ENCODE measurements at regions of chr19 and their contacts with region 1.

Region 1: GRCh38 chr19:42386974-42387707 is 3.0 kb downstream of the CNFN start:
- DNase-seq: peak; percentile 57
- H3K4me3 Mint-ChIP-seq: peak overlapping the region; percentile 21
- H3K27ac Mint-ChIP-seq: no peak overlapping the region
- H3K4me1 Mint-ChIP-seq: peaks cover 6% of the 10 kb centered on the region
- H3K27me3 Mint-ChIP-seq: peaks cover 35% of the 10 kb centered on the region

Region 2: DNA sequence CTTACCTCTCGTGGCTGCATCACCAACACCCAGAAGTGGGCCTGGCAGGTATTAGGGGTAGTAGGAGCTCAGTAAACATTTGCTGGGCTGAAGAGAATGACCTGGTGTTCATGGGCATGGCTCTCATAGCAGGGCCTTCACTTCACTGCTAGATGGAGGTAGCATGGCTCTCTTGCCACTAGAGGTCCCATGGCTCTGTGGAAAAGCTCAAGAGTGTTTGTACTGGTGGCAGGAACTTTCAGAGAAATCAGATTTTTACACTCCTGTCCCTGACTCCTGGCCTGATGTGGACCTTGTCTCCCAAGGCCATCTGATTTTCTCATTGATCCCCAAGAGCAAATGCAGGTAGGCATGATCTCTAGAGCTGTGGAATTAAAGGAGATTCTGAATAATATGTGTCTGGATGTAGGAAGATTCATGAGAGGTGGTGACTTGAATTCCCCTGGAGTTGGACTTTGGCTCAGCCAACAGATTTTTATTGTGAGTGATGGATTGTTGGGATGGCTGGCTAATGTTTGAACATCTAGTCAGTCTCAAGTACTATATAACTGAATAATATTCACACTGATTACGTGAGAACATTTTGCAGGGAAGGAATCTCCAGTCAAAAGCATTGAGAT is 305.4 kb before region 1 on chr19:
- intact Hi-C with region 1: no loop called
- DNase-seq: no peak
- H3K4me3 Mint-ChIP-seq: no peak overlapping the region
- H3K27ac Mint-ChIP-seq: no peak overlapping the region
- H3K4me1 Mint-ChIP-seq: peaks cover 26% of the 10 kb centered on the region
- H3K27me3 Mint-ChIP-seq: no peaks in the 10 kb centered on the region

Region 3: DNA sequence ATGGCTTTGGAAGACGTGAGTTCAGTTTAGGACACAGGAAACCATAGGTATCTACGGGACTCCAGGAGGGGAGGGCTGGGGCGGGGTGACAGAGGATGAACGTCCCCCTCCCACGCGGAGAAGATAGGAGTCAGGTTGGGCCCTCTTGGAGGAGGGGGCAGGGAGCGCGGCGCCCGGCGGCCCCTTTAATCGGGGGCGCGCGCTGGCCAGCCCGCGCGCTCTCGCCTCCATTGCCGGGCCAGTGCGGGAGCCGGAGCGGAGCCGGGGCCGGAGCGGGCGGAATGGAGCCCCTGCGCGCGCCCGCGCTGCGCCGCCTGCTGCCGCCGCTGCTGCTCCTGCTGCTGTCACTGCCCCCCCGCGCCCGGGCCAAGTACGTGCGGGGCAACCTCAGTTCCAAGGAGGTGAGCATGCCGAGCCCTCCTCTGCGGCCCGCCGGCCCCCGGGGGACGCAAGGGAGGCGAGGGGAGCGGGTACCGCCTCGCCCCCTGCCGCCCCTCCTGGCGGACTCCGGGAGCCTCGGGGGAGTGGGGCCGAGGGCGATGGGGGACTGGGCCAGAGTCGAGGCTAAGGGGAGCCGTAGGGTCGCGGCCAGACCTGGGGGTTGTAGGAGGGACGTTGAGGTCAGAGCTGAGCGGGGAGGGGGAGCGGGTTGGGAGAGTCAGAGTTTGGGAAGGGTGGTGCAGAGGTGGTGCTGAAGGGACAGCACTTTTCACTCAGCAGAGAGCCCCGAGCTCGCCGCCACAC is 73.9 kb before region 1 on chr19 and contains the start of gene TMEM145:
- intact Hi-C with region 1: no loop called
- DNase-seq: peak; percentile 35
- H3K4me3 Mint-ChIP-seq: peak within 1 kb of the TSS; percentile 79
- H3K27ac Mint-ChIP-seq: no peak within 1 kb of the TSS
- H3K4me1 Mint-ChIP-seq: peaks cover 7% of the 10 kb centered on the region
- H3K27me3 Mint-ChIP-seq: peaks cover 44% of the 10 kb centered on the region
- total RNA-seq, gene TMEM145: 0.56 and 2.1 TPM in 2 replicates

Region 4: GRCh38 chr19:42433503-42434260 is 46.5 kb after region 1 on chr19:
- intact Hi-C with region 1: loop called (anchors 2 kb)
- DNase-seq: peak; percentile 46
- H3K4me3 Mint-ChIP-seq: no peak overlapping the region
- H3K27ac Mint-ChIP-seq: no peak overlapping the region
- H3K4me1 Mint-ChIP-seq: peaks cover 6% of the 10 kb centered on the region
- H3K27me3 Mint-ChIP-seq: peaks cover 5% of the 10 kb centered on the region

Measured in activated T-helper 1 cell treated with anti-CD3 and anti-CD28 coated beads, Interleukin-12 subunit alpha, Interleukin-12 subunit beta, Interleukin-2, Interleukin-4 antibody, amounts not matched to agents 30 ng/mL and 10 ng/mL and 1 ng/mL, durations not matched to agents 14 hours and 24 hours and 36 hours (primary cell).